Prostate gland (tissue), 2 donors: ENCODE measurements at regions of chr3 and their contacts with region 1.

Region 1: DNA sequence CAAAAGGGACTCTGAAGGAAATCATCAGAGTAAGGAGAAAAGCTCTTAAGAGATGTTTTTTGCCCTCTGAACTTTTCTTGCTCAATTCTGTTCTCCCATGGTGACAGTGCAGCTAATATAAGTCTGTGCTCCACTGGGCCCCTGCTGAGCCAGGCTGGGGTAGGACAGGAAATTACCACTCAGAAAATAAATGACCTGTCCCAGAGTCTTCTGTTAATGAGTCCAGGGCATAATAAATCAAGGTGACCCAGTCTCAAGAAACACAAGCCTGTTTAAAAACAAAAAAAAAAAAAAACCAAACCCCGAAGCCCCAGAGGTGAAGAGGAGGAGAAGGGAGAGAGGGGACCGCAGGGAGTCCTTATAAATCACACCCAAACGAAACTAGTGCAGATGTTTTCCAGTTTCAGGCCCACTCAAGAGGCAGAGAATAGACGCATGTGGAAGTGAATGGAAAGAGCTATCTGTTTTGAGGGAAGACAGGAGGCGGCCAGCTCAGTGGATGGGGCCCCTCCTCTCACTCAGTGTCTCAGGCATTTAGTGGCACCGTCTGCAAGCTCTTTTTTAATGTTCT is 59.8 kb upstream of the BOC start:
- DNase-seq: no peak
- H3K4me3 ChIP-seq: no peak overlapping the region
- H3K27ac ChIP-seq: peak overlapping the region; percentile 2 to 36
- H3K4me1 ChIP-seq: no peaks in the 10 kb centered on the region
- H3K27me3 ChIP-seq: no peaks in the 10 kb centered on the region
- CTCF ChIP-seq: no peak
- POLR2A ChIP-seq: no peak

Region 2: DNA sequence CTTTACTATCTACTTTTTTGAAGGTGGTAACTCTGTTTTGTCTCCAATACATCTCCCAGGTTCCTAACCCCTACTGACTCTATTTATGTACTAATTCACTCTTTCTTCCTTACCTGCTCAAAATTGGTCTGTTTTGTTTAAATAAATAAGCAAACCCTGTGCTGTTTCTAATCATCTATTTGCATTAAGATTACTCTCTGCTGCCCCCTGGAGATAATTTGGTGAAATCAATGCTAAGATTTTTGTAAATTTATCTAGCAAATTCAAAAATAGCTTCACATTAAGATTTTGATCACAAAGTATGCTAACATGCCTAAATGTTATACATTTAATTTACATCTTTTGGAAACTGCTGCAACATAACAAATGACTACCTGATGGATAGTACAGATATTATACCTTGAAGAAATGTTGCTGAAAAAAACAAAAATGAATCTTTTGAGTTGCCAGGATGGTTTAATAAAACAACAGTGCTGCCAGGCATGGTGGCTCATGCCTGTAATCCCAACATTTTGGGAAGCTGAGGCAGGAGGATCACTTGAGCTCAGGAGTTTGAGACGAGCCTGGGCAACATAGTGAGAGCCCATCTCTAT is 172.2 kb before region 1 on chr3:
- intact Hi-C with region 1: no loop called
- DNase-seq: no peak
- H3K4me3 ChIP-seq: no peak overlapping the region
- H3K27ac ChIP-seq: no peak overlapping the region
- H3K4me1 ChIP-seq: no peaks in the 10 kb centered on the region
- H3K27me3 ChIP-seq: no peaks in the 10 kb centered on the region
- CTCF ChIP-seq: peak; percentile 22 to 68 (median 64)
- POLR2A ChIP-seq: no peak

Region 3: GRCh38 chr3:113084777-113085176 is 66.8 kb before region 1 on chr3:
- intact Hi-C with region 1: loop called (anchors 5 kb)
- DNase-seq: no peak
- H3K4me3 ChIP-seq: no peak overlapping the region
- H3K27ac ChIP-seq: no peak overlapping the region
- H3K4me1 ChIP-seq: no peaks in the 10 kb centered on the region
- H3K27me3 ChIP-seq: no peaks in the 10 kb centered on the region
- CTCF ChIP-seq: no peak
- POLR2A ChIP-seq: no peak

Region 4: DNA sequence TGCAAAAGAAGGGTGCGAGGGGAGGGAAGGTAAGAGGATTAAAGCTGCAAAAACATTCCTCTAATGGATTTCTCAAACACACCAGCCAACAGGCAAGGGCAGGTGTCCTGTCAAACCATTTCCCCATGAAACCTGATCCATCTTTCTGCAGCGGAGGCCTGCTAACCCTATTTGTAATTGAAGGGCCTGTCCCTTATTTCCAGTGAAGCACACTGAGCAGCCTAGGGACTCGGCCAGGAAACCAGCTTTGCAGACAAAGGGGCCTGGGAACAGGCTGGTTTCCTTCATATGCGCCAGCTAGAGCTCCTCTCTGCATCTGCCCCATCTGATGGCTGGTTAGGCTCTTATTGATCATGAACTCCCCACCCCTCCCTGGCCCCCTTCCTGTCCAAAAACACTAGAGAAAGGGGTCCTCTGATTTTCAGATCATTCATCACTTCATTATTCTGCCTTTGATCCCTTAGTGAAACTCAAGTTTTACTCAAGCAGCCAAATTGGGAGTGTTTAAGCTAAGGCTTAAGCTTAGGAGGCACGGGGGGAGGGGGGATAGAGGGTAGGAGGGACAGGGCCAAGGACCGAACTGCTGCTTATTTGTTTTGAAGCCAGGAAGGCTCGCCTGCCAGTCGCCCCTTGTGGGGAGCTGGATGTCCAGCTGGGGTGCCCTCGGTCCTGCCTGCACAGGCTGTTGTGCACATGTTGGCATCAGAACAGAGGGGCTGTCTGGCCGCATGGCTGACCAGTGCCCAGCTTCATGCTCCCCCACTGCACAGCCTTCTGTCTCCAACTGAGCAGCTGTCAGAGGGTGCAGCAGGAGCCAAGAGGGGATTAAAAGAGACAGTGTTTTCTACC is 113.0 kb after region 1 on chr3:
- intact Hi-C with region 1: loop called (anchors 5 kb)
- DNase-seq: peak; percentile 41
- H3K4me3 ChIP-seq: no peak overlapping the region
- H3K27ac ChIP-seq: peak overlapping the region in 1 of 2 donors; percentile 3
- H3K4me1 ChIP-seq: no peaks in the 10 kb centered on the region
- H3K27me3 ChIP-seq: no peaks in the 10 kb centered on the region
- CTCF ChIP-seq: no peak
- POLR2A ChIP-seq: no peak

Region 5: DNA sequence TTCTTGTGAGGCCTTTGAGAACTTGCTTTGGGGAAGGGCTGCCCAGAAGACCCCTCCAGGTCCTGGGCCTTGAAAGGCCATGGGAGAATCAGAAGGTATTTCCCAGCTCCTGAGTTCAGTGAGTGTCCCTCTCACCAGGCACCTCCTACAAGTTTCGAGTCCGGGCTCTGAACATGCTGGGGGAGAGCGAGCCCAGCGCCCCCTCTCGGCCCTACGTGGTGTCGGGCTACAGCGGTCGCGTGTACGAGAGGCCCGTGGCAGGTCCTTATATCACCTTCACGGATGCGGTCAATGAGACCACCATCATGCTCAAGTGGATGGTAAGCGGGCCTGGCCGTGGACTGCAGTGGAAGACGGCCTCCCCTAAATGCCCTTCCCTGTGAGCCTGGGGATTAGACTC is 128.1 kb after region 1 on chr3:
- intact Hi-C with region 1: loop called (anchors 5 kb)
- DNase-seq: no peak
- H3K4me3 ChIP-seq: no peak overlapping the region
- H3K27ac ChIP-seq: no peak overlapping the region
- H3K4me1 ChIP-seq: peaks cover 11% of the 10 kb centered on the region
- H3K27me3 ChIP-seq: no peaks in the 10 kb centered on the region
- CTCF ChIP-seq: no peak
- POLR2A ChIP-seq: no peak